K562 (cell line): ENCODE measurements at regions of chr22 and their contacts with region 1.

Region 1: DNA sequence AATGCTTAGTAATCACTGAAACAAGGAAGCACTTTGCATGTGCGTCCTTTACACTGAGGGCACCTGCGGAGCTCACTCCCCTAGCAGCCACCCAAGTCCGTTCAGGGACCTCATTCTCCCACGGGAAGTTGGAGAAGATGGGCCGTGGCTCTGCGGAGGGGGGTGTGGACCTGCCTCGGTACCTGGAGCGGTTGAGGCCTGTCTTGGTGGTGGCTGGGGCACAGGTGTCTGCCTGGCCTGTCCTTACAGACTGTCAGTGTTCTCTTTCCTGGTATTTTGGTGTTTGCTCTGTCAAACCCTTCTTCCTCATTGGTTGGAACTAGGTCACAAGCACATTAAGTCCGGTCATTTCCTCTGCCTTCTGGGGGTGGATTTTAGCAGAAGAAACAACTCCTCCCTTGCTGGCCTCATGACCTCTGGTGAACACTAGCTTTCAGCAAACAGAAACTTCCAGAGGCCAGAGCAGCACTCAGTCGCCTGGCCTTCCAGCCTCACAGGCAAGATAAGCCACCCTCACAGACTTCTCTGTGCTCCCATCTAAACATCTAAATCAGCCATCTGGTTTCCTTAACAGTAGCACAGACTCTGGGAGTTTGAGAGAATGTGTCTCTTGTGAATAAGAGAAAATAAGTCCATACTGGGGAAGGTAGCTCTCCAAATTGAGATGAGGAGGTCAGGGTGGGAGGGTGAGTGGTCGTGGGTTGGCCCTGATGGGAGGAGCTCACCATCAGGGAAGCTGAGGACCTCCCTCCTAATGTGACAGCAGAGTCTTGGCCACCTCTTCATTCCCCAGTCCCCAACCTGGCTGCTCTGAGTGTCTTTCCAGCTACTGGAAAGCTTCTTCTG is 8.6 kb downstream of the SNAP29 start:
- DNase-seq: peak; percentile 99 to 100 (median 100)
- ATAC-seq: peak; percentile 94
- H3K4me3 ChIP-seq: peak overlapping the region; percentile 8
- H3K27ac ChIP-seq: peak overlapping the region; percentile 74
- H3K4me1 ChIP-seq: peaks cover 59 to 62% of the 10 kb centered on the region in 2 experiments
- H3K27me3 ChIP-seq: no peaks in the 10 kb centered on the region
- CTCF ChIP-seq: peak in 1 of 3 experiments; percentile 15; a peak in 2 of 6 replicates
- EP300 ChIP-seq: peak; percentile 100
- POLR2A ChIP-seq: no peak
- RAD21 ChIP-seq: no peak

Region 2: GRCh38 chr22:20816559-20816958 is 50.8 kb before region 1 on chr22:
- CTCF ChIA-PET with region 1: no interaction called
- POLR2A ChIA-PET with region 1: interaction called, 15 read pairs
- in situ Hi-C with region 1: no loop called
- intact Hi-C with region 1: no loop called
- DNase-seq: peak in 1 of 4 experiments; percentile 38
- ATAC-seq: no peak
- H3K4me3 ChIP-seq: no peak overlapping the region
- H3K27ac ChIP-seq: no peak overlapping the region
- H3K4me1 ChIP-seq: no peaks in the 10 kb centered on the region
- H3K27me3 ChIP-seq: no peaks in the 10 kb centered on the region
- CTCF ChIP-seq: 0 out of 6 replicates have a peak, but pooled peaks of 1 of the 3 experiments have one; percentile 5
- EP300 ChIP-seq: no peak
- POLR2A ChIP-seq: no peak
- RAD21 ChIP-seq: no peak

Region 3: GRCh38 chr22:20852076-20852475 is 15.3 kb before region 1 on chr22:
- CTCF ChIA-PET with region 1: no interaction called
- POLR2A ChIA-PET with region 1: interaction called, 70 read pairs
- in situ Hi-C with region 1: no loop called
- intact Hi-C with region 1: no loop called
- DNase-seq: peak; percentile 50 to 66 (median 58)
- ATAC-seq: peak; percentile 59
- H3K4me3 ChIP-seq: no peak overlapping the region
- H3K27ac ChIP-seq: 0 out of 3 replicates have a peak overlapping the region, but pooled peaks have one; percentile 0
- H3K4me1 ChIP-seq: peaks cover 40 to 46% of the 10 kb centered on the region in 2 experiments
- H3K27me3 ChIP-seq: no peaks in the 10 kb centered on the region
- CTCF ChIP-seq: peak in 2 of 3 experiments; percentile 43 to 64; a peak in 3 of 6 replicates
- EP300 ChIP-seq: peak; percentile 65; the same call in 1 of the 2 replicates
- POLR2A ChIP-seq: no peak
- RAD21 ChIP-seq: no peak

Region 4: DNA sequence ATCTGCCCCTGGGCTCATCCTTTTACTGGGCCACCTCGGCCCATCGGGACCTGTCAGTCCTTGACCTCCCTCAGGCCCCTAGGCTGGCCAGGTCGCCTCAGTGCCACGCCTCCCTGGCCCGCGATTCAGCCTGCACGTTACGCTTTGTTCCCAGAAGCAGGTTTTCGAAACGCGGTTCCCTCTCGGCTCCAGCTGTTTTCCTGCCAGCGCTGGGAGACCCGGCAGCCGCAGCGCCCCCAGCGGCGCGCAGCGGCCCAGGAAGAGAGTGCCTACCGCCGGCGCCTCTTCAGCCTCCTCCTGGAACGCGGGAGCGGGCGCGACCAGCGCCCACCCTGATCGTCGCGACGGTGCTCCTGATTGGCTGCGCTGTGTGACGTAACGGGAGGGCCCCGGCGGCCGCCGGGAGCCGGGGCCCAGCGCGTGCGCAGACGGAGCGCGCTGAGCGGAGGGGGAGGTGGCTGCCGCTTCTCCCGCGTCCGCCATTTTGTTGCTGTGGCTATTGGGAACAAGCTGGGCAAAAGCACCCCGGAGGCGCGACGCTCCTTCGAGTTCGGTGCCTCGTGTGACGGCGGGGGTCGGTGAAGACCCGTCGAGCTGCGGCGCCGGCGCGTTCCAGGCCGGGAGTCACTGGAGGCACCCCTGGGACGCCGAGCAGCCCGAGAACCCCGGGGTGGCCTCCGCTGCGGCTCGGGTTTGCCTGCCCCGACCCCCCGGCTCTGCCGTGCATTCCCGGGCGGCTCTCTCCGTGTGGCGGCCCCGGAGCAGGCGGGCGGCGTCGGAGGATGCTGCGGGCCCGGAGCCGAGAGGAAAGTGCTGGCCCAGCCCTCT is 49.8 kb after region 1 on chr22 and contains the start of gene CRKL:
- CTCF ChIA-PET with region 1: no interaction called
- POLR2A ChIA-PET with region 1: interaction called, 24 read pairs
- in situ Hi-C with region 1: no loop called
- intact Hi-C with region 1: loop called (anchors 2 kb)
- DNase-seq: peak; percentile 100
- ATAC-seq: peak; percentile 93
- H3K4me3 ChIP-seq: peak within 1 kb of the TSS; percentile 67
- H3K27ac ChIP-seq: peak within 1 kb of the TSS; percentile 89
- H3K4me1 ChIP-seq: peaks cover 20 to 41% of the 10 kb centered on the region in 2 experiments
- H3K27me3 ChIP-seq: no peaks in the 10 kb centered on the region
- CTCF ChIP-seq: peak; percentile 99 to 100 (median 100)
- EP300 ChIP-seq: peak; percentile 88
- POLR2A ChIP-seq: no peak
- RAD21 ChIP-seq: no peak
- polyA plus RNA-seq, gene CRKL: 100 to 105 TPM

Region 5: DNA sequence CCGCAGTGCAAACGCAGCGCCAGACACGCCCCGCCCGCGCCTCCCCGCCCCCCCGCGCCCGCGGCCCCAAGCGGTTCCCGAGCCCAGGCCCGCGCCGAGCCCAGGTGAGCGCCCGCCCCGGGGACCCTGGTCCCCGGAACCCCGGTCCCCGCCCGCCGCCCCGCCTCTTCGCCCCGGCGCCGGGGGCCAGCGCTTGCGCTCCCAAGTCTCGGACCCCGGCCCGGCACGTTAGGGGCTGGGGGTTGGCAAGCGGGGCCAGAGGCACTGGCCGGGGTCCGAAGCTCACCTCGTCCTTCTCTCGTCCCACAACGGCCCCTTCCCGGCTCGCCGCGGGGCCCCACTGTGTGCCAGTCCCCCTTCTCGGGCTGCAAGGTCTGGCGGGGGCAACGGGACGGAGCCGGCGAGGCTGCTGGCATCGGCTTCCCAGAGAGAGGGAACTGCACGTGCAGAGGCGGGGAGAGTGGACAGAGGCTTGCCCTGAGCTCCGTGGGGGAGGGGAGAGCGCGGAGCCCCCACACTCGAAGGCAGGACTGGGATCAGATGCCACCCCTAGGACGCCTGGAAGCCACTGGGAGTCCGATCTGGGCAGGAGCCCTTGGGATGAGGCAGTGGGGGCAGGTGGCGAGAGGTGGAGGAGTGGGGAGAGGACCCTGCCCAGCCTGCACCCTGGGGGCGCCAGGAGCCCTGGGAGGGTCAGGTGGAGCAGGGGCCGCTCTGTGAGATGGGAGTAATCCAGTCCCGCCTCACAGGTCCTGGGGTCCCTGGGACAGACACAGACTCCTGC is 97.9 kb after region 1 on chr22:
- CTCF ChIA-PET with region 1: no interaction called
- POLR2A ChIA-PET with region 1: interaction called, 5 read pairs
- in situ Hi-C with region 1: no loop called
- intact Hi-C with region 1: loop called (anchors 5 kb)
- DNase-seq: peak in 3 of 4 experiments; percentile 65 to 97 (median 97)
- ATAC-seq: no peak
- H3K4me3 ChIP-seq: no peak overlapping the region
- H3K27ac ChIP-seq: no peak overlapping the region
- H3K4me1 ChIP-seq: peaks cover 0 to 40% of the 10 kb centered on the region in 2 experiments; a peak in 3 of 5 replicates
- H3K27me3 ChIP-seq: peaks cover 11 to 38% of the 10 kb centered on the region in 2 experiments; a peak in 4 of 5 replicates
- CTCF ChIP-seq: no peak
- EP300 ChIP-seq: no peak
- POLR2A ChIP-seq: no peak
- RAD21 ChIP-seq: no peak